ENCODE measurements at regions of chr21 and their contacts with region 1.

Region 1: DNA sequence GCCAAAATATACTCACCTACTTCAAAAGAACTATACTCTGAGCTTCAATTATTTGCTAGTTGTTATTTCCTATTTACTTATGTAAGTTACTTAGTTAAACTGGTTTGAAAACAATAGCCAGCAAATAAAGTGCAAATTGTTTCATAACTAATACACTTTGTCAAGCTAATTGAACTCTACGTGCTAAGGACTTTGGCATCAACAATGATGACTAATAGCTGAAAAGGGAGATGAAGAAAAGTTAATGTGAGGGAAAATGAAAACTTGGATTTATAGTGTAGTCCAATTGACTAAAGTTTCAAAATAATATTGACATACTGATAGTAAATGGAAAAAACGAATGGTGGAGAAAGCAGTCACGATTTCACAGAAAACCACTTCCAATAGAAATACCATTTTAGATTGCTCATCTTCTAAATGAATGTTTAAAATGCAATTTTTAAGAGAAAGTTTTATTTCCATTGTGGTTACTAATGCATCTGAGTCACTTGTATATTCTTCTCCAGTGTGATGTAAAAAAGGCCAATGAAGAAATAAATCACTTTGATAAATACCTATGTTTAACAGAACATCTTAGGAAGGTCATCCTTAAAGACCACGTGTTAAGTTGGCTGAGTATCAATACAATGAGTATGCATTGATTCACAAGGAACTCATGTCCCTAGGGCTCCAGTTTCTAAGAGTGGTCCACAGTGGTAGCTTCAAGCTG is 455.2 kb downstream of the LTN1 start:
- DNase-seq: no peak
- H3K4me3 ChIP-seq: no peak overlapping the region
- H3K27ac ChIP-seq: peak overlapping the region; percentile 40 to 48
- H3K4me1 ChIP-seq: peaks cover 0 to 3% of the 10 kb centered on the region in 2 donors
- H3K27me3 ChIP-seq: no peaks in the 10 kb centered on the region
- CTCF ChIP-seq: no peak

Region 2: GRCh38 chr21:28480470-28480869 is 57.1 kb before region 1 on chr21:
- intact Hi-C with region 1: loop called (anchors 5 kb)
- DNase-seq: no peak
- H3K4me3 ChIP-seq: no peak overlapping the region
- H3K27ac ChIP-seq: no peak overlapping the region
- H3K4me1 ChIP-seq: no peaks in the 10 kb centered on the region
- H3K27me3 ChIP-seq: no peaks in the 10 kb centered on the region
- CTCF ChIP-seq: no peak

Region 3: DNA sequence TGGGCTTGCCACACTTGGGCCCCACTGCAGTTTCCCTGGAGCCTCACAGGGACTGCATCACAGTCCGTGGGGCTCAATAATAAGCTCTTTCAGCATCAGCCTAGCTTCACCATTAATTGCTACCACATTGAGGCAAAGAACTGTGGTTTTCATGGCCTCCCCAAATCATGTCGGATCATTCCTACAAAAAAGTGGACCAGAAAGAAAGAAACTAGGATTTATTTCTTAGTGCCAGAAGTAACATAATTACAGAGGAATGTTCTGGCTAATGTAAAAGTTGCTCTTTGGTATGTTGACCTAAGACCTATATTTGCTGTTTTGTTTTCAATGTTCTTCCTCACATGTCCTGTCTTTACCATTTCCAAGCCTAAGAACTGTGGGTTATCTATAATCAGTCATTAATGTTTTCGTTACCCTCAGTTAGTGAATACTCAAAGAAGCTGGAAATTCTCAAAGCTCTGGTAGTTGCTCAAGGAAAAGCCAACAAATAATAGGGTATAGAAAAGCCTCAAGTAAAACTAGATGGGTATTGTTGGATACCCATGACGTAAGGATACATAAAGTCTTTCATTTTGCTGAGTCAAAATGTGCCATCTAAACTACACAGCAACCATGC is 281.2 kb after region 1 on chr21:
- intact Hi-C with region 1: no loop called
- DNase-seq: no peak
- H3K4me3 ChIP-seq: no peak overlapping the region
- H3K27ac ChIP-seq: peak overlapping the region; percentile 20 to 60
- H3K4me1 ChIP-seq: peaks cover 6 to 36% of the 10 kb centered on the region in 2 donors
- H3K27me3 ChIP-seq: no peaks in the 10 kb centered on the region
- CTCF ChIP-seq: no peak